SK-N-SH (cell line): ENCODE measurements at regions of chr17 and their contacts with region 1.

Region 1: DNA sequence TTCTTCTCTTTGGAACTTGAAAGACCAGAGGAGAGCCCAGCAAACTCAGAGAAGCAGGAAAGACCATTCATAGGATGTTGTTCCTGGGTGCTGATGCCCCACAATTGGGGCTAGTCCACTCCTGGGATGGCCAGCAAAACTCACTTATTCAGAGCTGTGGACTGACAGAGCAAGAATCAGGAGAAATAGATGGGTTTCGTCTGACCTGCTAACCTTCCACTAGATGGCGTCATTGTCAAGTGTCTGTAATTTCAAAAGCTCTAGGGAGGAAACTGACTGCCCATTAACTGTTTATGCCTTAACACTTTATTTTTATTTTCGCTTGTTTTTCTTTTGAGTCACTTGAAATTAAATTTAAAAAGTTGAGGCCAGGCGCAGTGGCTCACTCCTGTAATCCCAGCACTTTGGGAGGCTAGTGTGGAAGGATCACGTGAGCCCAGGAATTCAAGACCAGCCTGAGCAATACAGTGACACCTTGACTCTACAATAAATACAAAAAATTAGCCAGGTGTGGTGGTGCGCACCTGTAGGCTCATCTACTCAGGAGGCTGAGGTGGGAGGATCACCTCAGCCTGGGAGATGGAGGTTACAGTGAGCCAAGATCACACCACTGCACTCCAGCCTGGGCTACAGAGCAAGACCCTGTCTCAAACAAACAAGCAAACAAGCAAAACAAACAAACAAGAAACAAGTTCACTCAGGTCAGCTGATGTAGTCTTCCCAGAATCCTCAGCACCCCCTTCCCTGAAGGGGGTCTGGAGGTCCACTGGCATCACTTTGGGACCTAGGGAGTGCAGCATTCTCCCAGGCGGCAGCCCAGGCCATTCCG is 28.6 kb upstream of the MILR1 start:
- DNase-seq: peak; percentile 76
- H3K4me3 ChIP-seq: no peak overlapping the region; a peak in 1 of 4 replicates
- H3K27ac ChIP-seq: no peak overlapping the region
- H3K4me1 ChIP-seq: peaks cover 0 to 8% of the 10 kb centered on the region in 2 experiments; a peak in 1 of 4 replicates
- H3K27me3 ChIP-seq: no peaks in the 10 kb centered on the region
- CTCF ChIP-seq: peak; percentile 97
- EP300 ChIP-seq: no peak
- RAD21 ChIP-seq: peak; percentile 91

Region 2: GRCh38 chr17:63919311-63919723 is 501.0 kb before region 1 on chr17:
- CTCF ChIA-PET with region 1: interaction called, 13 read pairs
- POLR2A ChIA-PET with region 1: no interaction called
- DNase-seq: peak; percentile 89
- H3K4me3 ChIP-seq: no peak overlapping the region
- H3K27ac ChIP-seq: no peak overlapping the region
- H3K4me1 ChIP-seq: no peaks in the 10 kb centered on the region
- H3K27me3 ChIP-seq: peaks cover 31% of the 10 kb centered on the region
- CTCF ChIP-seq: peak; percentile 96
- EP300 ChIP-seq: no peak
- RAD21 ChIP-seq: peak; percentile 92

Region 3: DNA sequence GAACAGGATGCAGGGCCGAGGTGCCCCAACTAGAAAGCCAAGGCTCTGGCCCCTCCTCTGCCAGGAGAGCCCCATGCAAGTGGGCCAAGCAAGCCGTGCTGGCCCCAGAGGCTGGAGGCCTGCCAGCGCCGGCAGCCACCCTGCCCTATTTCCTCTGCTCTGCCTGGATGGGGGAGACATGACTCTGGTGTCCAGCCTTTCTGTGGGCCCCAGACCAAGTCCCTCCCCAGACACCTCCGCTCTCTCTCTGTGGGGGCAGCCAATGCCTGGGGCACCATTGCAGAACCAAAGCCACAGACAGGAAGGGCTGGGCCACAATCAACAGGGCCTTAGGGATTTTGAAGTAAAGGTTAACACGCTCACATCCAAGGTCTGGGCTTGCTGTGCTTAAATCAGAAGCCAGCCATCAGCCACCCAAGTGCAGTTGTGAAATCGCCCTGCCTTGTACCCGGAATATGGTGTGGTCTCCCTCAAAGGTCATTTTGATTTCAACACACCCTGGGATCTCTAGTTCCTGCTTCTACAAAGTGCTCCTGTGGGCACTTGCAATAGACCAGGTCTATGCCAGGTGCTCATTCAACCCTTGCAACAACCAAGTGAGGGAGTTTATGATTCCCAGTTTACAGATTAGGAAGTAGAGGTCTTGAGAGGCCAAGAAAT is 93.8 kb before region 1 on chr17:
- CTCF ChIA-PET with region 1: interaction called, 501 read pairs
- POLR2A ChIA-PET with region 1: interaction called, 3 read pairs
- DNase-seq: no peak
- H3K4me3 ChIP-seq: no peak overlapping the region
- H3K27ac ChIP-seq: no peak overlapping the region
- H3K4me1 ChIP-seq: peaks cover 15 to 18% of the 10 kb centered on the region in 2 experiments; a peak in 2 of 4 replicates
- H3K27me3 ChIP-seq: no peaks in the 10 kb centered on the region
- CTCF ChIP-seq: no peak
- EP300 ChIP-seq: no peak
- RAD21 ChIP-seq: no peak

Region 4: GRCh38 chr17:64385187-64386083 is 34.9 kb before region 1 on chr17:
- CTCF ChIA-PET with region 1: interaction called, 27 read pairs
- POLR2A ChIA-PET with region 1: no interaction called
- DNase-seq: no peak
- H3K4me3 ChIP-seq: peak overlapping the region in 1 of 2 experiments; percentile 53; a peak in 2 of 4 replicates
- H3K27ac ChIP-seq: peak overlapping the region in 1 of 2 experiments; percentile 94; a peak in 2 of 4 replicates
- H3K4me1 ChIP-seq: peaks cover 0 to 32% of the 10 kb centered on the region in 2 experiments; a peak in 3 of 4 replicates
- H3K27me3 ChIP-seq: no peaks in the 10 kb centered on the region
- CTCF ChIP-seq: 0 out of 2 replicates have a peak, but pooled peaks have one; percentile 20
- EP300 ChIP-seq: peak in 1 of 2 experiments; percentile 98; a peak in 2 of 4 replicates
- RAD21 ChIP-seq: no peak

Region 5: GRCh38 chr17:64441772-64442540 is 21.6 kb after region 1 on chr17:
- CTCF ChIA-PET with region 1: interaction called, 24 read pairs
- POLR2A ChIA-PET with region 1: no interaction called
- DNase-seq: no peak
- H3K4me3 ChIP-seq: no peak overlapping the region
- H3K27ac ChIP-seq: no peak overlapping the region
- H3K4me1 ChIP-seq: no peaks in the 10 kb centered on the region
- H3K27me3 ChIP-seq: no peaks in the 10 kb centered on the region
- CTCF ChIP-seq: no peak
- EP300 ChIP-seq: no peak
- RAD21 ChIP-seq: no peak

Region 6: DNA sequence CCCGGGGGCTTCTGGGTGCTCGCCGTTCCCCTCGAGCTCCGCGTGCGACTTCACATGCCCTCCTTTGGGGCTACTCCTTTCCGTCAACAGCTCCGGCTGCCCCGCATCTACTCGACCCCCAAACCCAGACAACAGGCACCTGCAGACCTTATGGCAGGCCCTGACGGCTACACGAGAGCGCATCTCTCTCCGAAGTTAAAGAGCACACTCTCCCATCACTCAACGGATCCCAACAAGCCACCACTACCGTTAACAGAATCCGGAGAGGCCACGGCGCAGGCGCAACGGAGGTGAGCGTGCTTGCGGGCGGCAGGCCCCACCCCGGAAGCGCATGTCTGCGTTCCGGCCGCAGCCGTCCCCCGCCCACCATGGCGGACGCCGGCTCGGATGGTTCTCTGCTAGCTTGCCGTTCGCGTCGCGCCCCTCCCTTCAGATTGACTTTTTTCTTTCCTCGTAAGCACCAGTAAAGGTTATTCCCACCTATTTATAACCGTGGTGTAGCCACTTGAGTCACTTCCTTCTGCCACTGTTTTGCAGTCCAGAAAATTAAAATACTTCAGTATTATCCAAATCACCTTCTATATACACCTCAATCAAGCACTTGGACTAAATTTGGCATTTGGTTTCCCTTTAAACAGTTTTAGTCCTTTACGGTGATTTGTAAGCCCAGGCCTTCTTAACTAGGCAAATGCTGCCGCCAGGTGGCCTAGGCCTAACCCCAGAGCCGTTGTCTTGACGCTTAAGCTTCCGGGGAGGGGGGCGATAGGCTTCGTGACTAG is 76.6 kb after region 1 on chr17 and contains the start of gene POLG2:
- CTCF ChIA-PET with region 1: interaction called, 122 read pairs
- POLR2A ChIA-PET with region 1: interaction called, 11 read pairs
- DNase-seq: peak; percentile 96
- H3K4me3 ChIP-seq: peak within 1 kb of the TSS; percentile 78 to 81
- H3K27ac ChIP-seq: peak within 1 kb of the TSS; percentile 87 to 99
- H3K4me1 ChIP-seq: peaks cover 27 to 29% of the 10 kb centered on the region in 2 experiments
- H3K27me3 ChIP-seq: no peaks in the 10 kb centered on the region
- CTCF ChIP-seq: peak; percentile 74
- EP300 ChIP-seq: no peak
- RAD21 ChIP-seq: peak; percentile 43
- polyA plus RNA-seq, gene POLG2: 18.0 and 20.1 TPM in 2 replicates

Region 7: DNA sequence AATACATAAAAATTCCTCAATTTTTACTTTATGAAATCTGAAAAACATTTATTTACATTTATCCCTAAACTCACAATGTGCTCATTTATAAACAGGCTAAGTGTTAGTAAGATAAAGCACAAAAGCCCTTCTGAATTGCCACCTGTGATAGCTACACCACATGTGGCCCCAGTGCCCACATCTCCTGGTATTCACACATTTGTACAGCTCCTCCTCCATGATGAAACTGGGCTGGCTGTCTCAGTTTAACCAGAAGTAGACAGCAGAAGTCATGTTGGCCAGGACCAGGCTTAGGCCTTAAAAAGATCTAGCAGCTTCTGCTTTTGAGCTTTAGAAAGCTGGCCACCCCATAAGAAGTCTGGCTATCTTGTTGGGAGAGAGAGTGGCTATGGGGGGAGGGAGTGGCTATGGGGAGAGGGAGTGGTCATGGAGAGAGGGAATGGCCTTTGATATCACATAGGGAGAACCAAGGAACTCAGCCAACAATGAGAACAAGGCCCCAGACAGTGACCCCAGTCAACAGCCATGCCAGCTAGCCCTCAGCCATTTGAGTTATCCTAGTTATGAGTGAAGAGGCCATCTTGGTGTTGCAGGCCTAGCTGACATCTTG is 133.8 kb after region 1 on chr17:
- CTCF ChIA-PET with region 1: no interaction called
- POLR2A ChIA-PET with region 1: no interaction called
- DNase-seq: no peak
- H3K4me3 ChIP-seq: no peak overlapping the region
- H3K27ac ChIP-seq: no peak overlapping the region
- H3K4me1 ChIP-seq: no peaks in the 10 kb centered on the region
- H3K27me3 ChIP-seq: no peaks in the 10 kb centered on the region
- CTCF ChIP-seq: no peak
- EP300 ChIP-seq: no peak
- RAD21 ChIP-seq: no peak